PC-3 (cell line): ENCODE measurements at regions of chr18 and their contacts with region 1.

Region 1: DNA sequence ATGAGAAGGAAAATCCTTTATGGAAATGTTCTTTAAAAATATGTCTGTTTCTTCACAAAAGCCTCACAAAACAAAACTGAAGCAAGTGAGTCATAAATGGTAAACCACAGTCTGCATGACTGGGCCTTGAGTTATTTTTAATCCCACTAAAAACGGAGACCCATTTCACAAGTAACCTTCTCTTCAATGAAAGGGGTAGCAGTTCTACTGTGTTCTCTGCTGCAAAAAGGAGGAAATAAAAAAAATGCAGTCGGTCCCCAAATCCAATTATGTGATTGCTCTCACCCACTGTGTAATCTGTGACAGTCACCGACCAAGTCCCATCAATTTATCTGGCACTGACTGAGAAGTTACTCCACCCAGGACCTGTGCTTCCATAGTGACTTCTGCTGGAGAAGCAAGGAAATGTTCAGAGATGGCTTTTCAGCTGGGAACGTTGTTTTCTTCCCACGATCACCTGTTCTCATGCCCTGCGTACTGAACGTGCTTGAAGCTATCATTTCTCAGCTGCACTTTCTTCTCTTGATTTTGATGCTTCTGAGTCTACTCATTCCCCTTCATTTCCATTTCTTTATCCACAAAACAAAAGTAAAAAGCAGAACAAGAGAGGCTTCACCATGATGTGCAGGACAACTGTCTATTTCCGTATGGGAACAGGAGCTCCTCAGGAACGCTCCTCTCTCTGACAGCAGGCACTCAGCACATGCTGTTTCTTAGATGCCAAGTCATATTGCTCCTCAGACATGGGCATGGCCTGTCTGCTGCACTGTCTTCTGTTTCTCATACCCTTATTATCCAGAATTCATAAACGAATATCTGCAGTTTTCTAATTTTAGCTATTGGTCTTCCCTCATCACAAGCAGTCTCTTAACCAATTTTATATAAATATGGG is 80.0 kb upstream of the TMEM200C start:
- DNase-seq: peak; percentile 74
- ATAC-seq: peak; percentile 83
- H3K4me3 ChIP-seq: no peak overlapping the region
- H3K27ac ChIP-seq: peak overlapping the region; percentile 30
- H3K4me1 ChIP-seq: peaks cover 14% of the 10 kb centered on the region
- H3K27me3 ChIP-seq: no peaks in the 10 kb centered on the region
- CTCF ChIP-seq: peak; percentile 56

Region 2: GRCh38 chr18:5275872-5276271 is 699.5 kb before region 1 on chr18:
- CTCF ChIA-PET with region 1: no interaction called
- POLR2A ChIA-PET with region 1: no interaction called
- intact Hi-C with region 1: no loop called
- DNase-seq: no peak
- ATAC-seq: no peak
- H3K4me3 ChIP-seq: no peak overlapping the region
- H3K27ac ChIP-seq: no peak overlapping the region
- H3K4me1 ChIP-seq: no peaks in the 10 kb centered on the region
- H3K27me3 ChIP-seq: no peaks in the 10 kb centered on the region
- CTCF ChIP-seq: no peak

Region 3: DNA sequence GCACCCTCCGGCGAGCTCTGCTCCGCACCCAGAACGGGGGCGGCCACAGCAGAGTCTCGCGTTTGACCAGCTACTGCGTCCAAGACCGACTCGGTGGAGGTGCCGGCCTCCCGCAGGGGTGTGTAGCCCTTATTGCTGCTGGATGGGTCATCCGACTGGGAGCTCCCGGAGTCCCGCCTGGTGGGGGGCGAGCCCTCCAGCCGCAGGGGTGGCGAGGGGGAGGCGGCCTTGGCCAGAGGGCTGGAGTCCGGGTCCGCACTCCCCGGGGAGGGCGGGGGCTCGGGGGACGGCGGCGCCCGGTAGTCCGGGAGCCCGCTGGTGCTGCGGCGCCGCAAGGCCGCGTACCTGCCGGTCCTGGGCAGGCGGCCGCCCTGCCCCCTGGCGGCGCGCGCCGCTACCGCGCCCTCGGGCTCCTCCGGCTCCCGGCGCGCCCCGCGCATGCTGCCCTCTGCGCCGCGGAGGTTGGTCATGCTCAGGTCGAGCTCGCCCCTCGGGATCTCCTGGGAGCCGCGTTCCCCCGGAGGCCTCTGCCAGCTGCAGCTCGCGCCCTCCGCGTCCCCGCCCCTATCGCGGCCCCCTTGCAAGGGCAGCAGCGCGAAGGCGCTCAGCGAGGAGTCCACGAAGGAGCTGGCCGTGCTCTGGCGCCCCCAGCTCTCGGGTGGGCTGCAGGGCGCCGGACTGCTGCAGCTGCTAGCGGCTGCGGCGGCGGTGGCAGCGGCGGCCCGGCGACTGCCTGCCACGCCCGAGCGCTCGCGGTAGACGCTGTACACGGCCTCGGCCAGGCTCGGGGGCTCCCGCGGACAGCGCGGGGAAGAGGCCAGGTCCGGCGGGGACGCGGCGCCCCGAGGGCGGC is 84.8 kb before region 1 on chr18:
- CTCF ChIA-PET with region 1: no interaction called
- POLR2A ChIA-PET with region 1: interaction called, 3 read pairs
- intact Hi-C with region 1: loop called (anchors 5 kb)
- DNase-seq: peak; percentile 56
- ATAC-seq: peak; percentile 80
- H3K4me3 ChIP-seq: peak overlapping the region; percentile 65
- H3K27ac ChIP-seq: no peak overlapping the region
- H3K4me1 ChIP-seq: 0 out of 2 replicates have a peak, but pooled peaks cover 4% of the 10 kb centered on the region
- H3K27me3 ChIP-seq: peaks cover 17% of the 10 kb centered on the region
- CTCF ChIP-seq: peak; percentile 37; the same call in 1 of the 2 replicates

Region 4: GRCh38 chr18:5895885-5896740 is 79.2 kb before region 1 on chr18:
- CTCF ChIA-PET with region 1: no interaction called
- POLR2A ChIA-PET with region 1: interaction called, 3 read pairs
- intact Hi-C with region 1: loop called (anchors 2 kb)
- DNase-seq: peak; percentile 55
- ATAC-seq: peak; percentile 46
- H3K4me3 ChIP-seq: peak overlapping the region; percentile 68
- H3K27ac ChIP-seq: 0 out of 2 replicates have a peak overlapping the region, but pooled peaks have one; percentile 4
- H3K4me1 ChIP-seq: peaks cover 19% of the 10 kb centered on the region
- H3K27me3 ChIP-seq: peaks cover 33% of the 10 kb centered on the region
- CTCF ChIP-seq: no peak

Region 5: GRCh38 chr18:6382963-6383362 is 407.6 kb after region 1 on chr18:
- CTCF ChIA-PET with region 1: no interaction called
- POLR2A ChIA-PET with region 1: no interaction called
- intact Hi-C with region 1: no loop called
- DNase-seq: no peak
- ATAC-seq: no peak
- H3K4me3 ChIP-seq: no peak overlapping the region
- H3K27ac ChIP-seq: no peak overlapping the region
- H3K4me1 ChIP-seq: no peaks in the 10 kb centered on the region
- H3K27me3 ChIP-seq: no peaks in the 10 kb centered on the region
- CTCF ChIP-seq: no peak

Region 6: DNA sequence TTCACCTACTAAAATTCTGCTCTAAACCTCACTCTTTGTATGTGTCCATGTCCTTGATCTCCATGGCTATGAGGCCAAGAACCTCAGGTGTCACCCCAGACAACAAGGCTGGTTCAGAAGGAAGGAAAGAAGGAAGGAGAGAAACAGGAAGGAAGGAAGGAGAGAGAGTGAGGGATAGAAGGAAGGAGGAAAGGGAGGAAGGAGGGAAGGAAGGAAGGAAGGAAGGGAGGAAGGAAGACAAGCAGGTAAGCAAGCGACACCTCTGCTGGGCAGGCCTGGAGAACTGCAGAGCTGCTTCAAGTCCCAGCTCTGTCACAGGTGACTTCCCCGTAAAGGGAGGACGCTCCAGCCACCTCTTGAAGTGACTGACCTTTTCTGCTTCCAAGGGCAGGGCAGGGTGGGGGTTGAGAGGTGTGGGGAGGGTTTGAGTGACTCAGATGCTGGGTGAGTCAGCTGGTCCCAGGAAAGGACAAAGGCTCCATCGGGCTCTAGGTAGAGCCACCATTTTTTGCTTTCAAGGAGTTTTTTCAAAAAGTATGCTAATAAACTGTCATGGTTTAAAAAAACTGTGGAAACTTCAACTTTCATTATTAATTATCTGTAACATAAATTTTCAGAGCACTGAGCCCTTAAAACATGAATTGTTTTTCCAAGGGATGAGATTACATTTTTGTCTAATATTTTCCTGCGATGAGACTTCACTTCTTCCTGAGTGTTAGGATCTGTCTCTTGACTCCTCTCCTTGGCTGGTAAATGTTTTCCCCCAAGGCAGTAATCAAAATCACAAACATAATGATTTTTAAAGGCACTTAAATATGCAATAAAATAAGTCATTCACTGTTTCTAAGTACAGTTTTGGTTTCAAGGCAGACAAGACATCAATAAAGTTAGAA is 529.5 kb after region 1 on chr18:
- CTCF ChIA-PET with region 1: no interaction called
- POLR2A ChIA-PET with region 1: no interaction called
- intact Hi-C with region 1: no loop called
- DNase-seq: no peak
- ATAC-seq: no peak
- H3K4me3 ChIP-seq: no peak overlapping the region
- H3K27ac ChIP-seq: no peak overlapping the region
- H3K4me1 ChIP-seq: peaks cover 8% of the 10 kb centered on the region
- H3K27me3 ChIP-seq: 0 out of 2 replicates have a peak, but pooled peaks cover 8% of the 10 kb centered on the region
- CTCF ChIP-seq: no peak